Right ventricle myocardium superior (tissue), 1 donor: ENCODE measurements at regions of chr4 and their contacts with region 1.

Region 1: DNA sequence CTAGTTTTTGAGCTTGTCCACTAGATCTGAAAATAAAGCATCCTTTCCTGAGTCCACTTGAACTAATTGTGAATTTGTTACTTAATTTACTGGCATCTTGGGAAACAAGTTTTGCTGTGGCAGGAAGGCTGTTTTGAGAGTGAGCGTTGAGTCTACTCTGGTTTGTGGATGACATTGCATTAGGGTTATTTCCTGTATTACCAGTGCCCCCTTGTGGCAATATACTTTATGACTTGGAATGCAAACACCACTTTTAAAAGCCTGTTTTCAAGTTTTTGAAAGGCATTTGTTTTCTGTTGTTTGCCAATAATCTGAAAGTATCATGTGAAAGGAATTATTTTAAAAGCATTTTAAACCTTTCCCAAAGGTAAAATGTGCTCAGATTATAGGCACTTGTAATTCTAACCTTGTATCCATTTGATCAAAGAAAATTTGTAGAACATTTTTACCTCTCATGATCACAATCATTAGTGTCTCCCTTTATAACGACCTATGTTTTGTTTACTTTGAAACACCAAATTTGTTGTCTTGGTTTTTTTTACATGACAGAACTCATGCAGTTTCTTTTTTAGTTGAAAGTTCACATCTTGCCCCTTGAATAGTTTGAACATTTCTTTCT is 18.0 kb upstream of the CYP2U1 start:
- DNase-seq: no peak
- ATAC-seq: peak; percentile 91

Region 2: GRCh38 chr4:107719922-107720722 is 193.3 kb before region 1 on chr4 and contains the start of gene PAPSS1:
- intact Hi-C with region 1: no loop called
- DNase-seq: peak; percentile 98
- ATAC-seq: peak; percentile 99
- total RNA-seq, gene PAPSS1: 7.8 TPM

Region 3: DNA sequence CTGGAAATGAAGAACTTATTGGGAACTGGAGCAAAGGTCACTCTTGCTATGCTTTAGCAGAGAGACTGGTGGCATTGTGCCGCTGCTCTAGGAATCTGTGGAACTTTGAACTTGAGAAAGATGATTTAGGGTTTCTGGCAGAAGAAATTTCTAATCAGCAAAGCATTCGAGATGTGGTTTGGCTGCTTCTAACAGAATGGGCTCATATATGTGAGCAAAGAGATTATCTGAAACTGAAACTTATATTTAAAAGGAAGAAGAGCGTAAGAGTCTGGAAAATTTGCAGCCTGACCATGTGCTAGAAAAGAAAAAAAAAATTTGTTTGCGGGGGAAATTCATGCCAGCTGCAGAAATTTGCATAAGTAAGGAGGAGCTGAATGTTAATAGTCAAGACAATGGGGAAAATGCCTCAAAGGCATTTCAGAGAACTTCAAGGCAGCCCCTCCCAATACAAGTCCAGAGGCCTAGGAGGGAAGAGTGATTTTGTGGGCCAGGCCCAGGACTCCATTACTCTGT is 157.5 kb before region 1 on chr4:
- intact Hi-C with region 1: loop called (anchors 2 kb)
- DNase-seq: no peak
- ATAC-seq: no peak

Region 4: DNA sequence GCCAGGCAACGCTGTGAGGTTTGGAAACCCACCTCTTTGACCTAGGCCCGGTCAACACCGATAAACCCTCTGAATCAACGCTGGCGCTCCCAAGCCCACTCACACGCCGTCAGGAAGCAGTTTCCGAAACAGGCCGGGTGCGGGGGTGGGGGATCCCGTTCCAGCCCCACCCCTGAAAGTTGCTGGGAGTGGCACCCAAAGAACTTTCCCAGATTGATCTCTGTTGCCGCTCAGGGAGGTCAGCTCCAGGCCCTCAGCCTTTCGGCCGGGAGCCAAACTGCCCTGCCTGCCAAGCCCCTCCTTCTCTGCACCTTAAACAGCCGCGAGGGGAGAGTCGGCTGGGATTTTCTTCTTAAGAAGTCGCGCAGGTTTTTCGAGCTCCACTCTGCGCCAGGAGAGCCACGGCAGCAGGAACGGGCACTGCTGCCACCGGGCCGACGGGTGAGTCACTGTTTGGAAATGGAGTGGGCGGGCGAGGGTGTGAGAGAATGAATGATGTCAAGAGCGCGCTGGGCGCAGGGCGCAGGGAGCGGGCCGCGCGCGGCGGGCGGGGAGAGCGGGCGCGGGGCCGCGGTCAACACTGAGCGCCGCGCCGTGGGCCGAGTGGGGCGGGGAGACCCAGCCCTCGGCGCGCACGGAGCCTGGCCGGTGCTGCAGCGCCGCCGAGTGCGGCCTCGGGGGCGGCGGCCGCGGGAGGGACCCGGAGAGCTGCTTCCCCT is 88.9 kb before region 1 on chr4 and contains the start of gene SGMS2:
- intact Hi-C with region 1: loop called (anchors 5 kb)
- DNase-seq: peak; percentile 91
- ATAC-seq: peak; percentile 96
- total RNA-seq, gene SGMS2: 18.5 TPM

Region 5: DNA sequence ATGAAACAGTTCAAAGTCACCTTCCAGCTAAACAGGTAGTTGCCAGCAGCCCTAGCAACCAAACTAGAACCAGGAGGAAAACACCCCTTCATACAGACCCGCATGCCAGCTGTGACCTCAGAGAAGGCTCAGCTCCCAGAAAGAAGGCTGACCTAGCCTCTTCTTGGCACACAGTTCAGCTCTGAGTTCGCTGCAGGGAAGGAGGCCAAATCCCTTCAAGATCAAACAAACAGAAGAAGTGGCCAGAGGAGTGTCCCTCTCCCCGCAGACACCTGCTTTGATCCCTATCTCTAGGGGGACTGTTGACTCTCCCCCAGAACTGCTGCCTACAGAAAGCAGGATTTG is 132.3 kb after region 1 on chr4:
- intact Hi-C with region 1: no loop called
- DNase-seq: peak; percentile 62
- ATAC-seq: peak; percentile 65